ENCODE measurements at regions of chr22 and their contacts with region 1.

Region 1: DNA sequence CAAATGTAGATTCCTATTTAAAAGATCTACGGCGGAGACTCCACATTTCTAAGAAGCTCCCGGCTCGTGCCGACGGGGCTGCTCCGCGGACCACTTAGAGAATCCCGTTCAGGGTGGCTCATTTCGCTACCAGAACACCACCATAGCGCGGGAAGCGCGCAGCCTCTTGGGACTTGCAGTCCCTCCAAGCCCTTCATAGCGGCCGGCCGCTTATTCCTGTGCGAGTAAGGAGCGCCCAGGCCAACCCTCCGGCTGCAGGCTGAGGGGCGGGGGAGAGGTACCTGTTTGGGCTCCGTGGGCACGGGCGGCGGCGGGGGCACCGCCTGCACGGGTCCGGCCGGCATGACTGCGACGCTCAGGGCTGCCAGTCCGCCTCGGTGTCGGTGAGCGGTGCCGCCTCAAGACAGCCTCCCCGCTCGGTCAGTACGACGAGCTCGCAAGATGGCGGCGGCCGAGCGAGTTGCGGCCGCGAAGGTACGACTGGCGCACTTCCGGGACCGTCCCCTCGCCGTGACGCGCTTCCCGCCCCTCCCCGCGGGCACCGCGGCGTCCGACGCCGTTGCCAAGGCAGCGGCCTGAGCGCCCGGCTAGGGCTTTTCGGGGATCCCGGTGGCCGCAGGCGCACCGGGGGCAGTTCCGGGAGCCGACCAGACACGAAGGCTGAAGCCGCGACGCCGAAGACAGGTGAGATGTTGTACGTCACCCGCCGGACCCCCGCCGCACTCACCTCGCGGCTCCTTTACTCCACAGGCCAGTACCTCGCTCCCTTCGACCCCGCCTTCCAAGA is at the starts of genes CCDC157 and SF3A1:
- DNase-seq: peak; percentile 95
- ATAC-seq: peak; percentile 88
- H3K4me3 ChIP-seq: peak within 1 kb of the TSS; percentile 92 to 98 (median 96)
- H3K4me3 Mint-ChIP-seq: peak within 1 kb of the TSS; percentile 91
- H3K27ac ChIP-seq: peak within 1 kb of the TSS; percentile 90 to 97
- H3K27ac Mint-ChIP-seq: peak within 1 kb of the TSS; percentile 91
- H3K4me1 ChIP-seq: peaks cover 24 to 35% of the 10 kb centered on the region in 2 donors
- H3K4me1 Mint-ChIP-seq: peaks cover 42% of the 10 kb centered on the region
- H3K27me3 ChIP-seq: no peaks in the 10 kb centered on the region
- H3K27me3 Mint-ChIP-seq: no peaks in the 10 kb centered on the region
- CTCF ChIP-seq: no peak
- total RNA-seq, gene CCDC157: 3.6 and 5.4 TPM in 2 replicates
- total RNA-seq, gene SF3A1: 283 and 286 TPM in 2 replicates

Region 2: GRCh38 chr22:30305519-30305905 is 51.1 kb before region 1 on chr22:
- CTCF ChIA-PET with region 1: interaction called, 5 read pairs
- POLR2A ChIA-PET with region 1: interaction called, 6 read pairs
- intact Hi-C with region 1: loop called (anchors 2 kb)
- DNase-seq: peak; percentile 75
- ATAC-seq: peak; percentile 59
- H3K4me3 ChIP-seq: peak overlapping the region; percentile 17 to 55 (median 43)
- H3K4me3 Mint-ChIP-seq: peak overlapping the region; percentile 80
- H3K27ac ChIP-seq: peak overlapping the region; percentile 73 to 86
- H3K27ac Mint-ChIP-seq: peak overlapping the region; percentile 89
- H3K4me1 ChIP-seq: peaks cover 100% of the 10 kb centered on the region in 2 donors
- H3K4me1 Mint-ChIP-seq: peaks cover 99% of the 10 kb centered on the region
- H3K27me3 ChIP-seq: no peaks in the 10 kb centered on the region
- H3K27me3 Mint-ChIP-seq: no peaks in the 10 kb centered on the region
- CTCF ChIP-seq: no peak

Region 3: GRCh38 chr22:30326706-30327362 is 29.8 kb before region 1 on chr22 and contains the start of gene TBC1D10A:
- CTCF ChIA-PET with region 1: interaction called, 5 read pairs
- POLR2A ChIA-PET with region 1: interaction called, 16 read pairs
- intact Hi-C with region 1: loop called (anchors 1 kb)
- DNase-seq: peak; percentile 95
- ATAC-seq: peak; percentile 96
- H3K4me3 ChIP-seq: peak within 1 kb of the TSS; percentile 40 to 92 (median 83)
- H3K4me3 Mint-ChIP-seq: peak within 1 kb of the TSS; percentile 86
- H3K27ac ChIP-seq: peak within 1 kb of the TSS; percentile 57 to 88
- H3K27ac Mint-ChIP-seq: peak within 1 kb of the TSS; percentile 93
- H3K4me1 ChIP-seq: peaks cover 30 to 43% of the 10 kb centered on the region in 2 donors
- H3K4me1 Mint-ChIP-seq: peaks cover 49% of the 10 kb centered on the region
- H3K27me3 ChIP-seq: no peaks in the 10 kb centered on the region
- H3K27me3 Mint-ChIP-seq: no peaks in the 10 kb centered on the region
- CTCF ChIP-seq: no peak
- total RNA-seq, gene TBC1D10A: 44.7 and 45.2 TPM in 2 replicates

Region 4: DNA sequence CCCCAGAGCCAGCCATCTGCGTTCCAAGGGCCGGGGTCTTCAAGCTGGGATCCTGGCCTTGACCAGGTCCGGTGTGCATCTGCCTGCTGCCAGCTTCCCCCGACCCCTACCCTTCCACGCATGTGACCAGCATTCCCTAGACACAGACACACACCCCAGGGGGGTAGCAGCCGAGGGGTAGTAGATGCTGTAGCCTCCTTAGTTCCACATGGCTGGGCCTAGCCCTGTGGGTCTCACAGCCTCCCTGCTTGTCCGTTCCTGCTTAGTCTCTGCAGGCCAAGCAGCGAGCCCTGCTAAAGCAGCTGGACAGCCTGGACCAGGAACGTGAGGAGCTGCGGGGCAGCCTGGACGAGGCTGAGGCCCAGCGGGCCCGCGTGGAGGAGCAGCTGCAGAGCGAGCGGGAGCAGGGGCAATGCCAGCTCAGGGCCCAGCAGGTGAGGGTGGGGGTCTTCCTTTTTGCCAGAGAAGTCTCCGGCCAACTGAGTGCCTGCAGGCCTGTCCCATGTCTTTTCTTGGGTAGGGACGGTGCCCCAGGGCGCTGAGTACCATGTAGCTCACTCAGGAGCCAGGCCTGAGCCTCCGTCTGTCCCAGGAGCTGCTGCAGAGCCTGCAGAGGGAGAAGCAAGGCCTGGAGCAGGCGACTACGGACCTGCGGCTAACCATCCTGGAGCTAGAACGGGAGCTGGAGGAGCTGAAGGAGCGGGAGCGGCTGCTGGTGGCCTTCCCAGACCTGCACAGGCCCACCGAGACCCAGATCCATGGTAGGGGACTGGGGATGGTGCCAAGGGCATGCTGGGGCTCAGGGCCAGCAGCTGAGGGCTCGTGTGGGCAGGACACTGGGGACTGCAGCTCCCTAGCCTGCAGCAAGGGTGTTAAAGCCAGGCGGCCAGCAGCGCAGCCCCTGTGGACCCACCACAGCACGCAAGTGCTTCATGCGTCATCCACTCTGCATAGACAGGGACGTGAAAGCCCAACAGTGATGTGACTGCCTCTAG is 17.0 kb after region 1 on chr22:
- CTCF ChIA-PET with region 1: no interaction called
- POLR2A ChIA-PET with region 1: no interaction called
- intact Hi-C with region 1: no loop called
- DNase-seq: no peak
- ATAC-seq: no peak
- H3K4me3 ChIP-seq: no peak overlapping the region
- H3K4me3 Mint-ChIP-seq: no peak overlapping the region
- H3K27ac ChIP-seq: no peak overlapping the region
- H3K27ac Mint-ChIP-seq: no peak overlapping the region
- H3K4me1 ChIP-seq: no peaks in the 10 kb centered on the region
- H3K4me1 Mint-ChIP-seq: no peaks in the 10 kb centered on the region
- H3K27me3 ChIP-seq: no peaks in the 10 kb centered on the region
- H3K27me3 Mint-ChIP-seq: no peaks in the 10 kb centered on the region
- CTCF ChIP-seq: no peak

Measured in B cell (primary cell).